Activated T-helper 1 cell treated with anti-CD3 and anti-CD28 coated beads, Interleukin-12 subunit alpha, Interleukin-12 subunit beta, Interleukin-2, Interleukin-4 antibody, amounts not matched to agents 30 ng/mL and 10 ng/mL and 1 ng/mL, durations not matched to agents 14 hours and 24 hours and 36 hours (primary cell): ENCODE measurements at regions of chr9 and their contacts with region 1.

Region 1: DNA sequence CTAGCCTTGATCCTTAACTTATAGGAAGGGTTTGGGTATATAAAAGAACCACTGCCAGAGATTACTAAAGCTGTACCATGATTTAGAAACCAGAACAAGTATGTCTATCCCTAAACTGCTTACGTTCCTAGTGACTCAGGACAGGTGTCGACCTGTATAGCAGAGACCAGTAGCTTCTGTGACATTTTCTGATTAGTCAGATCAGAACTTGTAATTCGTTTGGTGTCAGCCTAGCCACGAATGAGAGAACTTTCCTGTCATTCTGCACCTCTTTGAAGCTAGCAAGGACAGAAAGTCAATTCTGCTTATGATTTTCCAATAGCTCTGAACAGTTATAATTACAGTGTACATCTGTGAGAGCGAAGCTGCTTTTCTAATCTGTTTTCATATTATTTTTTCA is 39.5 kb downstream of the PRKACG start:
- DNase-seq: peak; percentile 22
- H3K4me3 Mint-ChIP-seq: peak overlapping the region; percentile 60
- H3K27ac Mint-ChIP-seq: peak overlapping the region; percentile 87
- H3K4me1 Mint-ChIP-seq: peaks cover 69% of the 10 kb centered on the region
- H3K27me3 Mint-ChIP-seq: no peaks in the 10 kb centered on the region

Region 2: DNA sequence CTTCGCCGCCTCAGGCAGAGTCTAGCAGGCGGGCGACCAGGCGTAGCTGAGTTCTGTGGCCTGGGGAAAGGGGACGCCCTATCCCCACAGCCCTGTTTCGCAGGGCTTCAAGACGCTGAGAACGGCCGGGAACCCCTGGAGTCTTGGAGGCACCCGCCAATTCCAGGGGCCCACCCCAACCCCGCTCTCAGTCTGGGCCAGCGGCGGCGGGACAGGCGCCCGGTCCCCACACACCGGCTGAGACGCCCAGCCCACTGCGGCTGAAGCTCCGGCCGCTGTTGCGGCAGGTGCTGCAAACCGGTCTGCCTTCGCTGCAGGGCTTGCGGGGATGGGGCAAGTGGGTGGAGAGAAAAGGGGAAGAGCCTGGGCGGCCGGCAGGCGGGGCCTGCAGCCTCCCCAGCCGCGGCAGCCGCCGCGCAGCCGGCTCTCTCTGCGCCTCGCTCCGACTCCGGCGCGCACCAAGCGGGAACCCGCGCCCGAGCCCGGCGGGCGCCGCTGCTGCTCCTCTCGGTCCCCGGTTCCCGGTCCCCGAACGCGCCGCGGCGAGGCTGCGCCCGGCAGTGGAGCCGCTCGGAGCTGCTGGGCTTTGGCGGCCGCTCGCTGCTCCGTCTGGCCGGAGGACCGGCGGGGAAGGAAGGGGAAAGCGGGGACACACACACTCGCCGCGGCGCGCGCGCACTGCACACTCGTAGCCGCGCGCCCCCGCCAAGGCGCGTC is 269.5 kb before region 1 on chr9 and contains the start of gene PIP5K1B:
- intact Hi-C with region 1: loop called (anchors 1 kb)
- DNase-seq: peak; percentile 44
- H3K4me3 Mint-ChIP-seq: peak within 1 kb of the TSS; percentile 85
- H3K27ac Mint-ChIP-seq: peak within 1 kb of the TSS; percentile 81
- H3K4me1 Mint-ChIP-seq: peaks cover 27% of the 10 kb centered on the region
- H3K27me3 Mint-ChIP-seq: peaks cover 57% of the 10 kb centered on the region
- total RNA-seq, gene PIP5K1B: 77.4 and 78.5 TPM in 2 replicates

Region 3: GRCh38 chr9:68779558-68780384 is 194.7 kb before region 1 on chr9:
- intact Hi-C with region 1: loop called (anchors 1 kb)
- DNase-seq: peak; percentile 89
- H3K4me3 Mint-ChIP-seq: no peak overlapping the region
- H3K27ac Mint-ChIP-seq: no peak overlapping the region
- H3K4me1 Mint-ChIP-seq: peaks cover 4% of the 10 kb centered on the region
- H3K27me3 Mint-ChIP-seq: no peaks in the 10 kb centered on the region

Region 4: DNA sequence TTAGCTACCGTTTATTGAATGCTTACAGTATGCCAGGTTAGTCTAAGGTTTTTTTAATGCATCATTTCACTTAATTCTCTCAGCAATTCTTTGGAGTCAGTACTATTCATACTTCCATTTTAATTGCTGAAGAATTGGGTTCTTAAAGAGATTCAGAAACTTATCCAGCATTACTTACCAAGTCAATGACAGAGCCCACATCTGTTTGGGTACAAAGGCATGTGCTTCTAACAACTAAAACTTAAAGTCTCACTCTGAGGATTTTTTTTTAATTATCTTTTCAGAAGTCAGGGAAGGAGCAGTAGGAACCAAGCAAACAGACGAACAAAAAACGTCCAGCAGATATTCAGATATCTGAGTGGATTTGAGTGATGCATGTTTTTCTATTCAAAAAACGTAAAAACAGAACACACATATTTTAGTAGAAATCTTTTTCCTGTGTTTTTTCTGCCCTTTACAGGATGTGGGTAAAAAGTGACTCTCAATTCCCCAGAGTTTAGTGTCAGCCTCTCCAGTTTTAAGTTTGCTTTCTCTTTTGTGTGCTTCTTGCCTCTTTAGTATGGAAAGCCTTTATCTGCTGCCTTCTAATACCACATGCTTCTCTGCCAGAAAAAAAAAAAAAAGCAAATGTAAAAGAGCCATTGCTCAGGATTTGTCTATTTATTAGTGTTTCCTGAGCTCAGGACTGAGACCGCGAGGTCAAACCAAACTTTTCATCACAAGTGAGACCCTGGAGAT is 78.5 kb before region 1 on chr9:
- intact Hi-C with region 1: loop called (anchors 1 kb)
- DNase-seq: no peak
- H3K4me3 Mint-ChIP-seq: peak overlapping the region; percentile 70
- H3K27ac Mint-ChIP-seq: peak overlapping the region; percentile 84
- H3K4me1 Mint-ChIP-seq: peaks cover 51% of the 10 kb centered on the region
- H3K27me3 Mint-ChIP-seq: no peaks in the 10 kb centered on the region

Region 5: DNA sequence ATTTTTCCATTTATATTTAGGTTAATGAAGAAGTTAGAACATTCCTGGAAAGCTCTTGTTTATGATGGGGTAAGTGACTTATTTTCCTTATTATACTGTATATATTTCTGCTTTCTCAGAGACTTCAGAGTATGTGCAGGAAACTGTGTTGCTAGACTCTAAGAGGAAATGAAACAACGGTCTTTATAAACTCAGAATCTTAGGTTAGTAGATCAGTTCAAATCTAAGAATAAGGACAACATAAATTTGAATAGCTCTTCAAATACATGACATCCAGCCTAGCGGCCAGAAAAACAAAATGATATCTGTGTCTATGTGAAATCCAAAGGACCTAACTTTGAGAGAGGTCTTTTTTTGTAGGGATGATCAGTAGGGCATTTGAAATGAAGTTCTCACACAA is 54.8 kb before region 1 on chr9:
- intact Hi-C with region 1: loop called (anchors 1 kb)
- DNase-seq: no peak
- H3K4me3 Mint-ChIP-seq: no peak overlapping the region
- H3K27ac Mint-ChIP-seq: no peak overlapping the region
- H3K4me1 Mint-ChIP-seq: peaks cover 45% of the 10 kb centered on the region
- H3K27me3 Mint-ChIP-seq: peaks cover 3% of the 10 kb centered on the region

Region 6: DNA sequence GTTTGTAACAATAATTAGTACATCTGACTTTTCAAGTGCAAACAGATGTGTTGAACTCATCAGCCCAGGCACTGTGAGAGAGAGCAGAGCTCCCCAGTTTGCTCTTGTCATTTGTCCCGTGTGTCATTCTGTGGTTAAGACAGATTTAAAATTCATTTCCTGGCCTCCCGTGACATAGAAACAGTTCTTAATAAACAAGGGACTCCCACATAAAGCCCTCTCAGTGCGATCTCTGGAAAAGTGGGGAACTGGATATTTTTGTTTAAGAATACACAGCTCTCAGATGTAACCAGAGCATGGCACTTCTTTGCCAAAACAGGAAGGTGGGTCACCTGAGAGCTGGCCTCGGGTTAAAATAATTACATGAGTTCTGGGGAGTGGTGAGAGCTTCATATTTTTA is 19.1 kb before region 1 on chr9:
- intact Hi-C with region 1: loop called (anchors 1 kb)
- DNase-seq: no peak
- H3K4me3 Mint-ChIP-seq: peak overlapping the region; percentile 54
- H3K27ac Mint-ChIP-seq: peak overlapping the region; percentile 91
- H3K4me1 Mint-ChIP-seq: peaks cover 47% of the 10 kb centered on the region
- H3K27me3 Mint-ChIP-seq: peaks cover 6% of the 10 kb centered on the region

Region 7: GRCh38 chr9:69035438-69036308 is 61.2 kb after region 1 on chr9 and contains the start of gene FXN:
- intact Hi-C with region 1: loop called (anchors 5 kb)
- DNase-seq: peak; percentile 78
- H3K4me3 Mint-ChIP-seq: peak within 1 kb of the TSS; percentile 88
- H3K27ac Mint-ChIP-seq: peak within 1 kb of the TSS; percentile 78
- H3K4me1 Mint-ChIP-seq: peaks cover 15% of the 10 kb centered on the region
- H3K27me3 Mint-ChIP-seq: no peaks in the 10 kb centered on the region
- total RNA-seq, gene FXN: 43.6 and 47.7 TPM in 2 replicates